ENCODE measurements at regions of chr22 and their contacts with region 1.

Region 1: GRCh38 chr22:36339171-36340065 is 48.3 kb downstream of the MYH9 start:
- DNase-seq: peak; percentile 55
- ATAC-seq: peak; percentile 31
- H3K4me3 Mint-ChIP-seq: peak overlapping the region; percentile 1
- H3K27ac Mint-ChIP-seq: peak overlapping the region; percentile 83
- H3K4me1 Mint-ChIP-seq: peaks cover 98% of the 10 kb centered on the region
- H3K27me3 Mint-ChIP-seq: no peaks in the 10 kb centered on the region

Region 2: DNA sequence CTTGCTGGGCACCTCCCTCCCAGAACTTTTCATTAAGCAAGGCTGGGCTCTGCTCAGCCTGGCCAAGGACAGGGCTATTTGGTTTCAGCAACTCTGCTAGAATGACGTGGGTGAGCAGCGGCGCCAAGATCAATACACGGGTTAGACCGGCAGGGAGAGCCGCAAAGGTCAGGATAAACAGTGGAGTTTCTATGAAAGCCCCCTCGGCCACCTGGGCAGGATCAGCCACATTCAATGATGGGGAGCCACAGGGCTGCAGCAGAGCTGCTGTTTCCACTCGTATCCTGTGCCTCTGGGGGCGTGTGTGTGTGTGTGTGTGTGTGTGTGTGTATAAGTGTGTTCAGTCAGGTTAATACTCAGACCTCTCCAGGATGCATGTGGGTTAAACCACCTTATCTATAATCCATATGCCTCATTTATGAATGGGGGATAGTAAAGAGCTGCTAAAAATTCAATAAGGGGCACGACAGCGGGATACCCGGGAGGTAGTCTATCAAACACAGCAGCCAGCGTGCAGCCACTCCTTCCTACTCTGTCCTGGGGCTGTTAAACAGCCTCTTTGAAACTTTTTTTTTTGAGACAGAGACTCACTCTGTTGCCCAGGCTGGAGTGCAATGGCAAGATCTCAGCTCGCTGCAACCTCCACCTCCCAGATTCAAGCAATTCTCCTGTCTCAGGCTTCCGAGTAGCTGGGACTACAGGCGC is 13.5 kb after region 1 on chr22:
- CTCF ChIA-PET with region 1: interaction called, 14 read pairs
- POLR2A ChIA-PET with region 1: interaction called, 14 read pairs
- DNase-seq: peak; percentile 74
- ATAC-seq: peak; percentile 31
- H3K4me3 Mint-ChIP-seq: peak overlapping the region; percentile 36
- H3K27ac Mint-ChIP-seq: peak overlapping the region; percentile 86
- H3K4me1 Mint-ChIP-seq: peaks cover 87% of the 10 kb centered on the region
- H3K27me3 Mint-ChIP-seq: no peaks in the 10 kb centered on the region